ENCODE measurements at regions of chr6 and their contacts with region 1.

Region 1: GRCh38 chr6:29759457-29759856 is 36.2 kb downstream of the HLA-F start:
- DNase-seq: no peak

Region 2: GRCh38 chr6:29834564-29835436 is 75.3 kb after region 1 on chr6:
- in situ Hi-C with region 1: loop called (anchors 5 kb)
- DNase-seq: peak; percentile 11

Measured in G401 (cell line).